ENCODE measurements at regions of chr20 and their contacts with region 1.

Region 1: GRCh38 chr20:23086056-23086566 is at the start of gene CD93:
- DNase-seq: peak; percentile 95
- H3K4me3 ChIP-seq: peak within 1 kb of the TSS; percentile 30 to 93 (median 82)
- H3K27ac ChIP-seq: peak within 1 kb of the TSS; percentile 98
- H3K4me1 ChIP-seq: peaks cover 53% of the 10 kb centered on the region
- H3K27me3 ChIP-seq: no peaks in the 10 kb centered on the region
- CTCF ChIP-seq: peak in 1 of 2 donors; percentile 14
- POLR2A ChIP-seq: peak; percentile 68
- total RNA-seq, gene CD93: 346 and 413 TPM in 2 replicates

Region 2: DNA sequence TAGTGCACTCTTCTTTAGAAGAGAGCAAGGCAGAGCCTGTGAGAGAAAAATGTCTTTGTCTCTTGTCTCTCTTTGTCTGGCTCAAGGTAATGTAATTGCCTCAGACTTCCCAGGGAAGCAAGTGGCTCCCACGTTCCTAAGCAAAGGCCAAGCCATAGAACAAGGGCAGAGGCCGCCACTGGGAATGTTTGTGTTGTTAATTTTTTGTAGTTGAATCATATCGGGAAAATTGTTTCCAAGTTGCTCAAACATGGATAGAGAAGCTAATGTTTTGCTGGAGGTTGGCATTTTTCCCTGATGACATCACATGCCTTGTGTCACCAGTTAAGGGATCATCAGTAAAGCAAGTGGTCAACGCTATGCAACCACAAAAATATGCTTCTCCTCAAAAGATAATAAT is 290.2 kb before region 1 on chr20:
- CTCF ChIA-PET with region 1: no interaction called
- POLR2A ChIA-PET with region 1: no interaction called
- dilution Hi-C with region 1: no loop called
- intact Hi-C with region 1: loop called (anchors 5 kb)
- DNase-seq: peak; percentile 98
- H3K4me3 ChIP-seq: no peak overlapping the region
- H3K27ac ChIP-seq: peak overlapping the region; percentile 100
- H3K4me1 ChIP-seq: peaks cover 43% of the 10 kb centered on the region
- H3K27me3 ChIP-seq: no peaks in the 10 kb centered on the region
- CTCF ChIP-seq: no peak
- POLR2A ChIP-seq: peak; percentile 50

Region 3: DNA sequence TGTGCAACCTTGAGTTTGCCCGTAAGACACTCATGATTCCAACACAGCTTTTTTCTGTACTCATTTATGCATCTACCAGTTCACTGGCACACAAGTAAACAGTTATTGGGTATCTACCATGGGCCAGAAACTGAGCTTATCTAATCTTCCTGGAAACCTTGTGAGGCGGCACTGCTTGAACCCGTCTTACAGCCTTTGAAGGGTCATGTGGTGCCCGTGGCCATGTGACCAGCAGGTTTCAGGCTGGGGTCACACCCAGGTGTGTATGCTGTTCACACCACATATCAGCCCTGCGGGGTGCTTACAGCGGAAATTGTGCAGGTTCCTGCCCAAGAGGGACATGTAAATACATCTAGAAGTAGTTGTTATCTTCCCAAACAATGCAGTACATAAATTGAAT is 42.7 kb before region 1 on chr20:
- CTCF ChIA-PET with region 1: no interaction called
- POLR2A ChIA-PET with region 1: no interaction called
- dilution Hi-C with region 1: no loop called
- intact Hi-C with region 1: no loop called
- DNase-seq: no peak
- H3K4me3 ChIP-seq: no peak overlapping the region
- H3K27ac ChIP-seq: no peak overlapping the region
- H3K4me1 ChIP-seq: peaks cover 8% of the 10 kb centered on the region
- H3K27me3 ChIP-seq: peaks cover 13 to 14% of the 10 kb centered on the region in 2 experiments
- CTCF ChIP-seq: no peak
- POLR2A ChIP-seq: no peak

Region 4: GRCh38 chr20:23106261-23106851 is 20.2 kb after region 1 on chr20:
- CTCF ChIA-PET with region 1: interaction called, 36 read pairs
- POLR2A ChIA-PET with region 1: interaction called, 20 read pairs
- dilution Hi-C with region 1: no loop called
- intact Hi-C with region 1: loop called (anchors 1 kb)
- DNase-seq: peak; percentile 93
- H3K4me3 ChIP-seq: no peak overlapping the region
- H3K27ac ChIP-seq: peak overlapping the region; percentile 70
- H3K4me1 ChIP-seq: peaks cover 52% of the 10 kb centered on the region
- H3K27me3 ChIP-seq: no peaks in the 10 kb centered on the region
- CTCF ChIP-seq: peak; percentile 27 to 39
- POLR2A ChIP-seq: peak; percentile 17

Region 5: DNA sequence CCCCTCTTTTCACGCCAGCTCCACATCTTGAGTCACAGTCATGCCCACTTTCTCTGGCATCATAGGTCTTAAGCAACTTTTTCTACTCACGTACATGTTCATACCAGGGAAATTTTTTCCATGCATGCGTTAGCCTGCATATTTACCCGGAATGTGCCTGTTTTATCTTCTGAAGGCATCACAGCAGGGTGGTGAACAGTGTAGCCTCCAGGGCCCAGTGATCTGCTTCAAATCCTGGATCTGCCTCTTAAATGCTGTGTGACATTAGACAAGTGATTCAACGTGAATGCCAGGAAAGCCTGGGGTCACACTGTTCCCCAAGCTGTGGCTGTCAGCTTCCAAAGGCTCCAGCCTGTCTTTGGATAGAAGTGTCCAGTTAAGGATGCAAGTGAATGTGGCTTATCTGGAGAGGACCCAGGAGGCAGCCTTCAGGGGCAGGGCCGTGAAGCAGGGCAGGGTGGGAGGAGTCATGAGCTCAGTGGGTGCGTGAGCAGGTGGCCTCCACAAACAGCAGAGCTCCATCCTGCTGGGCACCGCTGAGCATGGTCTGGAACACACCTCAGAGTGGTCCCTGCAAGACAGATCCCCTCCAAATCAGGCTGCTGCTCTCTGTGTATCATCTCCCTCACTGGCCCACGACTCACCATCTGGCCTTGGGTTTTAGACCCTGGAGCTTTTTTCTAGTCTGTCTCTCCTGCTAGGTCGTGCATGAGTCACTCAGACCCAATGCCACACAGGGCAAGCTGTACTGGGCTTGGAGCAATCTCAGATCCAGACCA is 30.4 kb after region 1 on chr20:
- CTCF ChIA-PET with region 1: no interaction called
- POLR2A ChIA-PET with region 1: no interaction called
- dilution Hi-C with region 1: no loop called
- intact Hi-C with region 1: no loop called
- DNase-seq: no peak
- H3K4me3 ChIP-seq: no peak overlapping the region
- H3K27ac ChIP-seq: no peak overlapping the region
- H3K4me1 ChIP-seq: peaks cover 8% of the 10 kb centered on the region
- H3K27me3 ChIP-seq: no peaks in the 10 kb centered on the region
- CTCF ChIP-seq: no peak
- POLR2A ChIP-seq: no peak

Region 6: GRCh38 chr20:23147964-23148730 is 62.0 kb after region 1 on chr20:
- CTCF ChIA-PET with region 1: interaction called, 25 read pairs
- POLR2A ChIA-PET with region 1: interaction called, 8 read pairs
- dilution Hi-C with region 1: no loop called
- intact Hi-C with region 1: loop called (anchors 1 kb)
- DNase-seq: peak; percentile 84
- H3K4me3 ChIP-seq: no peak overlapping the region
- H3K27ac ChIP-seq: peak overlapping the region; percentile 88
- H3K4me1 ChIP-seq: peaks cover 85% of the 10 kb centered on the region
- H3K27me3 ChIP-seq: no peaks in the 10 kb centered on the region
- CTCF ChIP-seq: no peak
- POLR2A ChIP-seq: no peak

Region 7: GRCh38 chr20:23200918-23201317 is 114.8 kb after region 1 on chr20:
- CTCF ChIA-PET with region 1: interaction called, 20 read pairs
- POLR2A ChIA-PET with region 1: no interaction called
- dilution Hi-C with region 1: no loop called
- intact Hi-C with region 1: no loop called
- DNase-seq: no peak
- H3K4me3 ChIP-seq: no peak overlapping the region
- H3K27ac ChIP-seq: no peak overlapping the region
- H3K4me1 ChIP-seq: no peaks in the 10 kb centered on the region
- H3K27me3 ChIP-seq: no peaks in the 10 kb centered on the region
- CTCF ChIP-seq: peak; percentile 42 to 54
- POLR2A ChIP-seq: no peak

Region 8: GRCh38 chr20:23214903-23215302 is 128.8 kb after region 1 on chr20:
- CTCF ChIA-PET with region 1: no interaction called
- POLR2A ChIA-PET with region 1: no interaction called
- dilution Hi-C with region 1: no loop called
- intact Hi-C with region 1: no loop called
- DNase-seq: no peak
- H3K4me3 ChIP-seq: no peak overlapping the region
- H3K27ac ChIP-seq: no peak overlapping the region
- H3K4me1 ChIP-seq: no peaks in the 10 kb centered on the region
- H3K27me3 ChIP-seq: peaks cover 0 to 11% of the 10 kb centered on the region in 2 experiments
- CTCF ChIP-seq: no peak
- POLR2A ChIP-seq: no peak

Region 9: GRCh38 chr20:23257848-23258746 is 172.0 kb after region 1 on chr20:
- CTCF ChIA-PET with region 1: no interaction called
- POLR2A ChIA-PET with region 1: interaction called, 3 read pairs
- dilution Hi-C with region 1: no loop called
- intact Hi-C with region 1: loop called (anchors 1 kb)
- DNase-seq: peak; percentile 97
- H3K4me3 ChIP-seq: no peak overlapping the region
- H3K27ac ChIP-seq: peak overlapping the region; percentile 98
- H3K4me1 ChIP-seq: peaks cover 39% of the 10 kb centered on the region
- H3K27me3 ChIP-seq: no peaks in the 10 kb centered on the region
- CTCF ChIP-seq: no peak
- POLR2A ChIP-seq: peak; percentile 25